AG04449 (cell line): ENCODE measurements at regions of chr3 and their contacts with region 1.

Region 1: GRCh38 chr3:123652346-123652984 is 67.6 kb upstream of the HACD2 start:
- DNase-seq: no peak
- H3K4me3 ChIP-seq: no peak overlapping the region
- CTCF ChIP-seq: peak; percentile 97

Region 2: DNA sequence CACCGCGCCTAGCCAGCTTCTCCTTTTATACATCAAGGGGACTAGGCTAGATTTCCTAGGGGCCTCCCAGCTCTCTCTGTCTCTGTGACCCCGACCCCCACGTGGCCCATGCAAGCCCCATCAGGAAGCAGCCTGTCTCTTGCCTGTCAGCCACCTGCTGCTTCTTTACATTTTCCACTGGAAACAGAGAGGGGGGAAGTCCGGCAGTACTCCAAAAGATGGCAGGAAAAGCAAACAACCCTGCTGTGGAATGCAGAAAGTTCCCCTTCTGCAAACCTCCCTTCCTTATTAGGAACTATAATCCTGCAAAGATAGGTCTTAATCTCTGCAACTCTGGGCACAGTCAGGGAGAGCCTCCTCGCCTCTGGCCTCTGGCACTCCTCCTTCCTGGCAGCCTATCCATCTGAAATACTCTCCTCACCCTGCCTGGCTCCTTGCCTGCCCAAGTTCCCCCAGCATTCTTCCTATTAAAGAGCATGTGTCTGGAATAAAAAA is 20.3 kb before region 1 on chr3:
- CTCF ChIA-PET with region 1: interaction called, 11 read pairs
- POLR2A ChIA-PET with region 1: no interaction called
- DNase-seq: peak; percentile 68
- H3K4me3 ChIP-seq: no peak overlapping the region
- CTCF ChIP-seq: no peak

Region 3: GRCh38 chr3:123678108-123678511 is 25.6 kb after region 1 on chr3:
- CTCF ChIA-PET with region 1: interaction called, 81 read pairs
- POLR2A ChIA-PET with region 1: interaction called, 6 read pairs
- DNase-seq: peak; percentile 81
- H3K4me3 ChIP-seq: no peak overlapping the region
- CTCF ChIP-seq: no peak

Region 4: GRCh38 chr3:123694366-123695145 is 42.1 kb after region 1 on chr3:
- CTCF ChIA-PET with region 1: interaction called, 436 read pairs
- POLR2A ChIA-PET with region 1: interaction called, 5 read pairs
- DNase-seq: no peak
- H3K4me3 ChIP-seq: no peak overlapping the region
- CTCF ChIP-seq: no peak

Region 5: GRCh38 chr3:123739754-123740153 is 87.3 kb after region 1 on chr3:
- CTCF ChIA-PET with region 1: interaction called, 21 read pairs
- POLR2A ChIA-PET with region 1: no interaction called
- DNase-seq: no peak
- H3K4me3 ChIP-seq: no peak overlapping the region
- CTCF ChIP-seq: no peak

Region 6: DNA sequence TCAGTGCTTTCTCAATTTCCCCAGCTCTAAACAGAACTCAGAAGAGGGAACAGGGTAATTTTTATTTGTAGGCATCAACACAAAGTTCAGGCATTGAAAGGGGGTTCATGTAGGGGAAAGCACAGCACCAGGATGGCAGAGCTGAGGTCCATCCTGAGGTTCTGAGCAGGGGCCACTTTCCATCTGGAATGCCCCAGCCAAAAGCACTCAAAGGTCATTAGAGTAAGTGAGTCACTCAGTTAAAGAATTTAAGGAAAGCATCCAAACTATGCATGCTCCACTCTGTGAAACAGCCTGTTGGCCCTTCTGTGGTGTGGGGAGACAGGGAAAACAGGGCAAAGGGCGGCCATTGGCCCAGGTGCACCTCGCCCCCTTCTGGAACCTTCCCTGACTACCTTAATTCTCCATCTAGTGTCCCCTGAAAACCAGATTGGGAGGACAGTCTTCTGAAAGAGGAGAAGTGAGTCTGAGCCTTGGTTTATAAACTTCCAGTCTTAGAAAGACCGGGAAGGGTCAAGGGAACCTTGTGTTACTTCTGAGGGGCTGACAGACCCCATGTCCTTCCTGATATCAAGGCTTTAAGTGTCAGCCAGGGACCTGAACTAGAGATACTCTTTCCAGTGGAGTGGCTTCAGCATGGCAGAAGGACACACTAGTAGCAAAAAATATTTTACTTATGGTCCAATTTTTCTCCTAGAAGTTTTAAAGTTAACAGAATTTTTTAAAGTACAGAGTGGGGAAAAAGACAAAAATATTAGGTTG is 98.4 kb after region 1 on chr3:
- CTCF ChIA-PET with region 1: interaction called, 14 read pairs
- POLR2A ChIA-PET with region 1: interaction called, 3 read pairs
- DNase-seq: no peak
- H3K4me3 ChIP-seq: no peak overlapping the region
- CTCF ChIP-seq: peak; percentile 17

Region 7: GRCh38 chr3:123980539-123980938 is 328.1 kb after region 1 on chr3:
- CTCF ChIA-PET with region 1: interaction called, 12 read pairs
- POLR2A ChIA-PET with region 1: no interaction called
- DNase-seq: no peak
- H3K4me3 ChIP-seq: no peak overlapping the region
- CTCF ChIP-seq: no peak